Psoas muscle (tissue), 8 donors: ENCODE measurements at regions of chr11 and their contacts with region 1.

Region 1: GRCh38 chr11:43944761-43945311 is 2.4 kb downstream of the C11orf96 start:
- DNase-seq: peak; percentile 77 to 89
- ATAC-seq: peak; percentile 69 to 85 (median 76)
- H3K4me3 ChIP-seq: peak overlapping the region; percentile 83
- H3K27ac ChIP-seq: peak overlapping the region; percentile 79
- H3K4me1 ChIP-seq: peaks cover 13% of the 10 kb centered on the region
- H3K27me3 ChIP-seq: peaks cover 0 to 12% (median 4%) of the 10 kb centered on the region in 3 donors
- CTCF ChIP-seq: peak; percentile 93

Region 2: GRCh38 chr11:43895601-43896000 is 49.2 kb before region 1 on chr11:
- intact Hi-C with region 1: loop called (anchors 1 to 2 kb)
- DNase-seq: no peak
- ATAC-seq: no peak
- H3K4me3 ChIP-seq: no peak overlapping the region
- H3K27ac ChIP-seq: no peak overlapping the region
- H3K4me1 ChIP-seq: no peaks in the 10 kb centered on the region
- H3K27me3 ChIP-seq: no peaks in the 10 kb centered on the region
- CTCF ChIP-seq: no peak

Region 3: DNA sequence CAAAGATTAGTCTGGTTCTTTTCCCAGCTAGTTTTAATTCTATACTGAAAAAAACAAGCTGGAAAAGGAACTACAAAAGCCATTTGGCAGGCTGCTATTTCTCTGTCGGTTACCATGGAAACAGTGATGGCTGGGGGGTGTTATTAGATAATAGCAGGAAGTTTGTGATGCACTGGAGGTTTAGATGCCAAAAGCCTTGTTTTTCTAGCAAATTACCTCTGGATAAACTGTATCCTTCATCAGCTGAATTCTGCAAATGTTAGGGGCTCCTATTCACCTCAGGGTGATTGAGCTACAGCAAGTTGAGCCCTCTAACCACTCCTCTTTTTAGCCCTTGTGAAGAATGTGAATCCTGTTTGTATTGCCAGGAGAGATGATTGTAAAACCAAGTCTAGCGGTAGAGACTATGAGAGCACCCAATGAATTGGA is 39.0 kb before region 1 on chr11:
- intact Hi-C with region 1: loop called in 1 of 2 experiments (anchors 5 kb)
- DNase-seq: no peak
- ATAC-seq: no peak
- H3K4me3 ChIP-seq: no peak overlapping the region
- H3K27ac ChIP-seq: peak overlapping the region; percentile 11
- H3K4me1 ChIP-seq: peaks cover 21% of the 10 kb centered on the region
- H3K27me3 ChIP-seq: no peaks in the 10 kb centered on the region
- CTCF ChIP-seq: no peak

Region 4: DNA sequence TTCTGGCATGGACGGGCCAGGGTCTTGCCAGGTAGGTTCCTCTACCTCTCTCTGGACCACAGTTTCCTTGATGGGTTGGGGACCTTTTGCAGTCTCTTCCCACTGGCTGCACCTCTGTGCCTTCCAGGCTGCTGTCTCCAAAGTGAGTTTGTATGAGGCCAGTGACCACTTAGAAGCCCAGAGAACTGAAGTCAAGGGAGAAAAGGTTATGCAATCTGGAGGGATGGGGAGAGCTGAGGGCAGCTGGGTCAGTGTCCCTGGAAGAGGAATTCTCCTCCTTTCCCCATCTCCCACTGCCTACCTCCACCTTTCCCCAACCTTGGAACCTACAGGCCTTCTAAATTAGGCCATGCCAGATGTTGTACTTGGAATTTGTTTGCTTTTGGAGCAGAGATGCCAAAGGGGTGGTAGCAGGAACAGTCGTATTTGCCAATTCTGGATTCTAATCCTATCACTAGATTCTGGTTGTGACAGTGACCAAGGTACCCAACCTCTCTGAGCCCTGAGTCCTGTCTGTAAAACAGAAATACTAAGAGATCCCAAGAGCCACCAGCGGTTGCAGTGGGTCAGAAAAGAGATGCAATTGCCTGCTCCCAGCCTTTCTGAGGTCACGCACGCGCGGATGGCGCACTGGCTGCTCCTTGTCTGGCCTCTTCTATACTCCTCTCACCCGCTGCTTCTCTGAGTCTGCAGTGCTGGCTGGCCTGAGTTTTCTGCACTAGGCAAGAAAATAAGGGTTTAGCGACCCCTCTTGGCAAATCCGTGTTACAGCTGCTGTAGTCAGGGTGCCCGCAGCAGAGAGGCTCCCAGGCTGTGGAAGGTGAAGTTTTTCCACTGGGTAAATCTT is 92.2 kb after region 1 on chr11:
- intact Hi-C with region 1: loop called in 1 of 2 experiments (anchors 2 kb)
- DNase-seq: peak; percentile 77 to 83
- ATAC-seq: peak; percentile 81 to 89 (median 84)
- H3K4me3 ChIP-seq: no peak overlapping the region
- H3K27ac ChIP-seq: no peak overlapping the region
- H3K4me1 ChIP-seq: peaks cover 6% of the 10 kb centered on the region
- H3K27me3 ChIP-seq: no peaks in the 10 kb centered on the region
- CTCF ChIP-seq: peak; percentile 76